A549 (cell line): ENCODE measurements at regions of chr10 and their contacts with region 1.

Region 1: DNA sequence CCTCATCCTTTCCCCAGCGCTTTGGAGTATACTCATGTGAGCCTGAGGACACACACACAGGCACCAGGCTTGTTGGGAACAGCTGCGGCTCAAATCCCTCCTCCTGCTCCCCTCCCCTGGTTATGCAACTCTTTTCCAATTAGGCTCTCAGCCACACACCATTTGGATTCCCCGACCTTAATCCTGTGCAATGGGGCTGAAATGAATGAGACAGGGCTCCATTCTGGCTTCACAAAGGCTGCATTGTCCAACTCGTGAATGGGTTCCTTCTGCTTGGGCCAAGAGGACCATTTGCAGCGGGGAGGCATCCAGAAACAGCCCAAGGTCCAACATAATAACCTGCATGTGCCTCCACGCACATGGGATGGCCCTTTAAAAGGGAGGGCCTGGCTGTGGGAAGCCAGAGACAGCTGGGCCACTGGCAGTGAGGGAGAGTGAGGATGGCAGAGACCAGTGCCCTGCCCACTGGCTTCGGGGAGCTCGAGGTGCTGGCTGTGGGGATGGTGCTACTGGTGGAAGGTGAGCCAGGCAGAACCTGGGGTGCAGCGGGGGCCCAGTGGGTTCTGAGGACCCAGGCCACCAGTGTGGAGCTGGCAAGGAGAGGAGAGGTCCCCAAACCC is at the start of gene RGR:
- DNase-seq: no peak
- ATAC-seq: 0 out of 6 replicates have a peak, but pooled peaks of 1 of the 2 experiments have one; percentile 23
- H3K4me3 ChIP-seq: no peak within 1 kb of the TSS
- H3K27ac ChIP-seq: no peak within 1 kb of the TSS
- H3K4me1 ChIP-seq: no peaks in the 10 kb centered on the region
- CTCF ChIP-seq: no peak
- EP300 ChIP-seq: no peak
- POLR2A ChIP-seq: no peak
- RAD21 ChIP-seq: no peak
- polyA plus RNA-seq, gene RGR: not detected in 2 replicates

Region 2: DNA sequence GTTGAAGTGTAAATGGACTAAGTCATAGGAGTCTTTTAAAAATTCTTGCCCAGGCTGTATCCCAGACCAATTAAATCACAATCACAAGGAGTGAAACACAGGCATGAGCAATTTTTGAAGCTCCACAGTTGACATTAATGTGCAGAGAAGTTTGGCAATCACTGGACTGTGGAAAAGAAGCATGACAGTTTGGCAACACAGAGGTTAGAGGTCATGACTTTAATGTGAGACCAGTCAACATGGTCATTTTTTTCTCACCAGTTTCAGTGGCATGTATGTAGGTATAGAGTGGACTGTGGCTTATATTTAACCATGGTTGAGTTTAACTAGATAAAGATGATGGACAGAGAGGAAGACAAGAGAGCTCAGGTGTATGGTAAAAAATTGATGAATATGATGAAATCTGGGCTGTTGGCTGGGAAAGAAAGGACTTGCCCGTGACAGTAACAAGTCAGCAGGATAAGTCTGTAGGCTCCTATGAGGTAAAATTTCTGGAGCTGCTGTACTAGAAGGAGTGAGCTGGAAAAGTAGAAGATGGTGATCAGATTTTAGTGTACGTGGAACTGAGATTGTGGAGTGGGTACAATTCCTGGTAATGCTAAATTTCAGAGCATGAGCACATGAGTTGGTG is 537.7 kb before region 1 on chr10:
- CTCF ChIA-PET with region 1: no interaction called
- POLR2A ChIA-PET with region 1: no interaction called
- DNase-seq: no peak
- ATAC-seq: no peak
- H3K4me3 ChIP-seq: no peak overlapping the region
- H3K27ac ChIP-seq: no peak overlapping the region
- H3K4me1 ChIP-seq: no peaks in the 10 kb centered on the region
- CTCF ChIP-seq: no peak
- EP300 ChIP-seq: no peak
- POLR2A ChIP-seq: no peak
- RAD21 ChIP-seq: no peak

Region 3: GRCh38 chr10:84205049-84205852 is 39.5 kb before region 1 on chr10:
- CTCF ChIA-PET with region 1: no interaction called
- POLR2A ChIA-PET with region 1: no interaction called
- DNase-seq: peak; percentile 61 to 62
- ATAC-seq: peak; percentile 65 to 91
- H3K4me3 ChIP-seq: no peak overlapping the region
- H3K27ac ChIP-seq: no peak overlapping the region
- H3K4me1 ChIP-seq: no peaks in the 10 kb centered on the region
- CTCF ChIP-seq: peak; percentile 52; the same call in 2 of the 3 replicates
- EP300 ChIP-seq: no peak
- POLR2A ChIP-seq: no peak
- RAD21 ChIP-seq: peak; percentile 54 to 72

Region 4: DNA sequence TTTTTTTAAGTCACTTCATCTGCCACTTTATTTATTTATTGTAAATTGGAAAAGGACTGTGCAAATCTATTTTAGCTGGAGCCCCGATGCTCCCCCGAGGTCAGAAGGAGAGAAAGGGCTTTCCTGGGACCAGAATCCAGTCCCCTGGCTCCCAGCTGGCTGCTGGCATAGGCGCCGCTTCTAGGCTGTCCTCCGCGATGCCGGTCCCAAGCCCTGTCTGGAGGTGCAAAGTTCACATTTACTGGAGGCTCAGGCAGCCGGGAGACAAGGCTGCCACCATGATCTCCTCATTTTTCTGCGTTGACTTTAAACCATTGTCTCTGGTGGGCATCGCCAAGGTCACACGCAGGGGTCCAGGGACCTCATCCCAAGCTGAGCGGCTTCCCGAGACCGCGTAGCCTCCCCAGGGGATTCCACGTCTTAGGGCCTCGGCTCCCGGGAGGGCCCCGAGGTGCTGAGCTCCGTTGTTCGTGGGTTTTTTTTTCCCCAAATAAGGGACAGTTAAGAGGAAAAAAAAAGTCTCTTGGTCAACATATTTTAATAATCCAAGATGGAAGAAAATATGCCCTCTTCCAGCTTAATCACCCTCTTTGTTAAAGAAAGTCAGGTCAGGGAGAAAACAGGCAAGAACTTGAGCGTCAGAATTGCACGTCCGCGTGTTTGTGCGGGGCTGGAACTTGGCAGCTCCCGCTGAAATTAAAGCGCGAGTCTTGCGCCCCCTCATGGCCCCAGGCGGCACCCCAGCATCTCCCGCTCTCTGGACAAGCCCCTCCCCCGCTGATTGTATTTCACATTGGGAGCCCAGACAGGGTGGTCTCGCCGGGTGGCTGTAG is 12.0 kb after region 1 on chr10:
- CTCF ChIA-PET with region 1: interaction called, 16 read pairs
- POLR2A ChIA-PET with region 1: no interaction called
- DNase-seq: peak; percentile 44 to 67
- ATAC-seq: peak; percentile 70 to 88; a peak in 5 of 6 replicates
- H3K4me3 ChIP-seq: peak overlapping the region; percentile 31; the same call in 2 of the 3 replicates
- H3K27ac ChIP-seq: no peak overlapping the region
- H3K4me1 ChIP-seq: 0 out of 3 replicates have a peak, but pooled peaks cover 4% of the 10 kb centered on the region
- CTCF ChIP-seq: peak; percentile 56
- EP300 ChIP-seq: no peak
- POLR2A ChIP-seq: no peak
- RAD21 ChIP-seq: peak; percentile 48 to 50; a peak in 4 of 5 replicates

Region 5: DNA sequence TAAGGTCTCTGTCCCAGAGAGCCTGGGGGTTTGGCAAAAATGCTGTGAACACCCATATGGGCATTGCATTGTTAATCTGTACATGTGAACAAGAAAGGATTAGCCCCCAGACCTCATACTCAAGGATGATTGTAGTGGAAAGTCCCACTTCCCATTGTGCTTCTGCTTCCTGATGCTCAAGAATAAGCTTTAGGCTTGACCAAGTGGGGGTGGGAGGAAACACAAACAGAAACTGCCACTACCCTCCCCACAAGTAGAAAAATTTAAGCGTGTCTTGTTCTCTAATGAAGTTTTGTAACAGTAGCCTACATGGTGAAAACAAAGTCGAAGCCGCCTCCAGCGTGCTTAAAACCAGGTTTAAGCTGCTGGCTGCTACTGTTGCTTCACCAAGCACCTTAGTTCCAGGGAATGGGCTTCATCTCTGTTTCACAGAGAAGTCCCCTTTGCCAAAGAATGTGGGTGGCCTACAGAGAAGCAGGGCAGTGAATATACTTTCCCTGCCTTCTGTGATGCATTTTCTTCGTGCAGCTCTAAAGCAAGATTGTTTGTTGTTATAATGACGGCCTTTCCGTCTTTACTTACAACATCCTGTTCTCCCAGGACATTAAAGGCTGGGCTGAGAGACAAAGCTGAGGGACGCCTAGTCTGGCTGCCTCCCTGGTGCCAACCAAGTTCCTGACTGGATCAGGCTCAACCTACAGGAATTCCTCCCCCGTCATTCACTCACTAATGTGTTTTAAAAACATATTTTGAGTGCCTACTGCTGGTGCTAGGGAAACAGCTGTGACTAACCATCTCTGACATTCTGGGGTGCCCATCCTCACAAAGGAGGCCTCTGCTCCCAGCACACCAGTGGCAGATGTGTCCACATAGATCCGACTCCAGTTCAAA is 51.6 kb after region 1 on chr10:
- CTCF ChIA-PET with region 1: no interaction called
- POLR2A ChIA-PET with region 1: no interaction called
- DNase-seq: no peak
- ATAC-seq: no peak
- H3K4me3 ChIP-seq: no peak overlapping the region
- H3K27ac ChIP-seq: no peak overlapping the region
- H3K4me1 ChIP-seq: no peaks in the 10 kb centered on the region
- CTCF ChIP-seq: no peak
- EP300 ChIP-seq: no peak
- POLR2A ChIP-seq: no peak
- RAD21 ChIP-seq: no peak